H1 (cell line): ENCODE measurements at regions of chr4 and their contacts with region 1.

Region 1: DNA sequence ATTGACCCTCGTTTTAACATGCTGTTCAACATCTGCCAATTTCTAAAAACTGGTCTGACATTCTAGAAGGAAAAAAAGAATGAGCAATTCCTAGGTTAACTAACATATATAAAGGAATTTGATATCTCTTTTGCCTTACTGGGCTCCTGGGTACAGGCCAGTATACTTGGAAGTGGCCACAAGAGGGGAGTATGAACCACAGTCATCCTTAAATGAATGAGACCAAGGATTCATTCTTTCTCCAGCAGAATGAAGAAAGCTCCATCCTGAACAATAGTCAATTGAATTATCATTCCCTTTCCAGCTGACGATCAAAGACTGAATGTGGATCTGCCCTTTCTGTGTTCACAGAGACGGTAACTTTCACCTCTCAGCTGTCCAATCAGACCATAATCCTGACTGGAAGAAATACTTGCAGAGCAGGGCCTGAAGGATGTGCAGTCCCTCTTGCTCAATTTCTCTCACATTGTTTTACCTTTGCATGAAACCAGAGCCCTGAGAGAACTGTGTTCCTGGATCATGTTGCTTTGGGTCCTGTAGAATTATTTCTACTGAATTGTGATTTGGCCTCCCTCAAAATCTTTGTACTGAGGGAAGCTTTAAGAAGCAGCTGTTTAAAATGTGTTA is 14.8 kb upstream of the SPARCL1 start:
- DNase-seq: no peak
- H3K4me3 ChIP-seq: no peak overlapping the region
- H3K27ac ChIP-seq: no peak overlapping the region
- H3K4me1 ChIP-seq: peaks cover 0 to 2% (median under 1%) of the 10 kb centered on the region in 4 experiments; a peak in 2 of 7 replicates
- H3K27me3 ChIP-seq: no peaks in the 10 kb centered on the region
- CTCF ChIP-seq: peak in 2 of 3 experiments; percentile 61 to 71; a peak in 3 of 4 replicates
- EP300 ChIP-seq: no peak
- POLR2A ChIP-seq: no peak
- RAD21 ChIP-seq: peak; percentile 78 to 86

Region 2: GRCh38 chr4:87529187-87529586 is 14.8 kb before region 1 on chr4 and contains the start of gene SPARCL1:
- CTCF ChIA-PET with region 1: interaction called, 22 read pairs
- POLR2A ChIA-PET with region 1: no interaction called
- DNase-seq: no peak
- H3K4me3 ChIP-seq: no peak within 1 kb of the TSS
- H3K27ac ChIP-seq: no peak within 1 kb of the TSS
- H3K4me1 ChIP-seq: peaks cover 0 to 9% (median 1%) of the 10 kb centered on the region in 4 experiments; a peak in 2 of 7 replicates
- H3K27me3 ChIP-seq: no peaks in the 10 kb centered on the region
- CTCF ChIP-seq: no peak
- EP300 ChIP-seq: no peak
- POLR2A ChIP-seq: no peak
- RAD21 ChIP-seq: no peak
- total RNA-seq, gene SPARCL1: 0.48 and 0.78 TPM in 2 replicates

Region 3: GRCh38 chr4:87555773-87556619 is 12.0 kb after region 1 on chr4:
- CTCF ChIA-PET with region 1: interaction called, 18 read pairs
- POLR2A ChIA-PET with region 1: interaction called, 3 read pairs
- DNase-seq: no peak
- H3K4me3 ChIP-seq: no peak overlapping the region
- H3K27ac ChIP-seq: no peak overlapping the region
- H3K4me1 ChIP-seq: peaks cover 0 to 3% (median 0%) of the 10 kb centered on the region in 4 experiments; a peak in 2 of 7 replicates
- H3K27me3 ChIP-seq: no peaks in the 10 kb centered on the region
- CTCF ChIP-seq: no peak
- EP300 ChIP-seq: no peak
- POLR2A ChIP-seq: no peak
- RAD21 ChIP-seq: no peak

Region 4: DNA sequence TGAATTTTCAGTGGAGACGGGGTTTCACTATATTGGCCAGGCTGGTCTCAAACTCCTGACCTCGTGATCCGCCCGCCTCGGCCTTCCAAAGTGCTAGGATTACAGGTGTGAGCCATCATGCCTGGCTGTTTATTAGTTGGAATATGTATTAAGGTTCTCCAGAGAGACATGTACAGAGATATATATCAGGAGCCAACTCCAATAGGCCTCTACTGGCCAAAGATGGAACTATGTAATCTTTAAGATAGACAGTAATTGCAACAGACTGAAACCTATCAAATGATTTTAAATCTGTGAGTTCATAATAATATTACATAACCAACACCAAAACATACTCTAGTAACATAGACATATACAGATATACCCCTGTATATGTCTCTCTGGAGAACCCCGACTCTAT is 100.3 kb after region 1 on chr4:
- CTCF ChIA-PET with region 1: interaction called, 22 read pairs
- POLR2A ChIA-PET with region 1: no interaction called
- DNase-seq: no peak
- H3K4me3 ChIP-seq: no peak overlapping the region
- H3K27ac ChIP-seq: no peak overlapping the region
- H3K4me1 ChIP-seq: no peaks in the 10 kb centered on the region
- H3K27me3 ChIP-seq: no peaks in the 10 kb centered on the region
- CTCF ChIP-seq: no peak
- EP300 ChIP-seq: no peak
- POLR2A ChIP-seq: no peak
- RAD21 ChIP-seq: no peak

Region 5: GRCh38 chr4:87659247-87659931 is 115.4 kb after region 1 on chr4:
- CTCF ChIA-PET with region 1: no interaction called
- POLR2A ChIA-PET with region 1: no interaction called
- DNase-seq: no peak
- H3K4me3 ChIP-seq: no peak overlapping the region
- H3K27ac ChIP-seq: no peak overlapping the region
- H3K4me1 ChIP-seq: peaks cover 0 to 4% (median 0%) of the 10 kb centered on the region in 4 experiments; a peak in 3 of 7 replicates
- H3K27me3 ChIP-seq: no peaks in the 10 kb centered on the region
- CTCF ChIP-seq: no peak
- EP300 ChIP-seq: no peak
- POLR2A ChIP-seq: no peak
- RAD21 ChIP-seq: no peak